ENCODE measurements at regions of chr3 and their contacts with region 1.

Region 1: GRCh38 chr3:46488735-46489361 is 8.9 kb upstream of the RTP3 start:
- DNase-seq: peak; percentile 67
- H3K4me3 ChIP-seq: no peak overlapping the region
- H3K27ac ChIP-seq: no peak overlapping the region
- H3K27me3 ChIP-seq: peaks cover 5% of the 10 kb centered on the region
- CTCF ChIP-seq: peak; percentile 100

Region 2: DNA sequence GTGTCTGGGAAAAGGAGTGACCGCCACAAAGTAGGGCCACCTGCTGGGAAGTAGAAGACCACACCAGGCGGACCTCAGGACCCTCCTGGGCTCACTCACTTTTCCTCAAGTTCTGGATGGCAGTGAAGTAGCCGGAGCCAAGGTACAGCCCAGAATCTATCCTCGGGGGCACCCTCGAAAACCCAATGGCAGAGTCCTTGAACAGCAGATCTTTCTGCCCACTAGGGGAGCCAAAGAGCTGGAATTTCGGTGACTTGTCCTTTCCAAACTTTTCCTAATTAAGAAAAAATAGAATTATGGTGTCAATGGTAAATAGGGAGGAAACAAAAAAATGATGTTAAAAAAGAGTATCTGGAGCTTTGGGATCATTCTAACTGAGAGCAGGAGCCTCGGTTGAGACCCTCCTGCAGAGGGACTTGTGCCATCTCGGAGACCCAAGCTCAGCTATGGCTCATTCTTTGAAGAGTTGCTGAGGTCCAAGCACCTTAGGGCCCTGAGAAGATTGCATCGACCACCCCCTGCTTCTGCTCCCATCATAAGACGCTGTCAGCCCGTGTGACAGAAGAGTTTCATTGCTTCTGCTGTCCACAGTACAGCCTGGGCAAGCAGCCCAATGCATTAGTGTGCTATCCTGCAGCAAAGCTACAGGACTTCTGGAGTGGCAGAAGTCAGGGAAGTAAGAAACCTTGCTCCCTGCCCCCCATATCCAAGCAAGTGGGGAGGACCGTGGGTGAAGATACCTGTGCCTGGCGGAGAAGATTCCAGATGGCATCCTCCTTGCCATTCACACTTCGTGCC is 38.9 kb before region 1 on chr3:
- CTCF ChIA-PET with region 1: interaction called, 10 read pairs
- POLR2A ChIA-PET with region 1: no interaction called
- DNase-seq: no peak
- H3K4me3 ChIP-seq: no peak overlapping the region
- H3K27ac ChIP-seq: no peak overlapping the region
- H3K27me3 ChIP-seq: peaks cover 22% of the 10 kb centered on the region
- CTCF ChIP-seq: peak; percentile 66

Region 3: DNA sequence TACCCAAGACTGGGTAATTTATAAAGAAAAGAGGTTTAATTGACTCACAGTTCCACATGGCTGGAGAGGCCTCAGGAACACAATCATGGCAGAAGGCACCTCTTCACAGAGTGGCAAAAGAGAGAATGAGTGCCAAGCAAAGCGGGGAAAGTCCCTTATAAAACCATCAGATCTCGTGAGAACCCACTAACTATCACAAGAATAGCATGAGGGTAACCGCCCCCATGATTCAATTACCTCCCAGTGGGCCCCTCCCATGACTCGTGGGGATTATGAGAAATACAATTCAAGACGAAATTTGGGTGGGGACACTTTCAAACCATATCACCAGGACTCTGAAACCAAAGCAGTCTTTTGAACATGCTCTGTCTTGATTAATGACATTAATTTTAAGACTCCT is 15.9 kb after region 1 on chr3:
- CTCF ChIA-PET with region 1: interaction called, 30 read pairs
- POLR2A ChIA-PET with region 1: interaction called, 9 read pairs
- DNase-seq: no peak
- H3K4me3 ChIP-seq: no peak overlapping the region
- H3K27ac ChIP-seq: no peak overlapping the region
- H3K27me3 ChIP-seq: no peaks in the 10 kb centered on the region
- CTCF ChIP-seq: no peak

Region 4: DNA sequence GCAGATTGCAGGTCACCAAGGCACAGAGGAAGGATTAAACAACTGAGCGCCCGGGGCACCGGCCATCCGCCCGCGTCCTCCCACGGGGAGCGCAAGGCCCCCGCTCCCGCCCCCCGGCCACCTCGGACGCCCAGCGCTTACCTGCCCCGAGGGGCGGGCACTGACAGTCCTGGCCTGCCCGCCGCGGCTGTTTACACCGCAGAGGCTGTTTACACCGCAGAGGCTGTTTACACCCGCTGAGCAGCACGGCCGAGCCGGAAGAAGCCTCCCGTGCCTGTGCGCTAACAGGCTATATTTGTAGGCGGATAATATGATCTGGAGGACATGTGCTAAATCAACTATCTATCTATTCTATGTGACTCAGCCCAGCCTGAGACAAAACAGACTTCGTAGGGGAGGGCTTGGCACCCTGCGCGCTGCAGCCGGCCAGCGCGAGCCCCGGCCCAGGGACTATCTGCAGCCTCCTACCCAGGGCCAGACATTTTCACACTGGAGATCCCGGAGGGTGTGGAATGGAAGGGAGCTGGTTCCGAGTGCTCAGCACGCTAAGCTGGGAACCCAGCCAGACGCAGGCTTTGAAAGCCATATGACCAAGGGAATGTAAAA is 77.3 kb after region 1 on chr3 and contains the start of gene LRRC2:
- CTCF ChIA-PET with region 1: interaction called, 75 read pairs
- POLR2A ChIA-PET with region 1: interaction called, 3 read pairs
- DNase-seq: peak; percentile 23
- H3K4me3 ChIP-seq: peak within 1 kb of the TSS; percentile 63
- H3K27ac ChIP-seq: no peak within 1 kb of the TSS
- H3K27me3 ChIP-seq: peaks cover 2% of the 10 kb centered on the region
- CTCF ChIP-seq: no peak
- polyA plus RNA-seq, gene LRRC2: 3.3 and 4.2 TPM in 2 replicates

Region 5: DNA sequence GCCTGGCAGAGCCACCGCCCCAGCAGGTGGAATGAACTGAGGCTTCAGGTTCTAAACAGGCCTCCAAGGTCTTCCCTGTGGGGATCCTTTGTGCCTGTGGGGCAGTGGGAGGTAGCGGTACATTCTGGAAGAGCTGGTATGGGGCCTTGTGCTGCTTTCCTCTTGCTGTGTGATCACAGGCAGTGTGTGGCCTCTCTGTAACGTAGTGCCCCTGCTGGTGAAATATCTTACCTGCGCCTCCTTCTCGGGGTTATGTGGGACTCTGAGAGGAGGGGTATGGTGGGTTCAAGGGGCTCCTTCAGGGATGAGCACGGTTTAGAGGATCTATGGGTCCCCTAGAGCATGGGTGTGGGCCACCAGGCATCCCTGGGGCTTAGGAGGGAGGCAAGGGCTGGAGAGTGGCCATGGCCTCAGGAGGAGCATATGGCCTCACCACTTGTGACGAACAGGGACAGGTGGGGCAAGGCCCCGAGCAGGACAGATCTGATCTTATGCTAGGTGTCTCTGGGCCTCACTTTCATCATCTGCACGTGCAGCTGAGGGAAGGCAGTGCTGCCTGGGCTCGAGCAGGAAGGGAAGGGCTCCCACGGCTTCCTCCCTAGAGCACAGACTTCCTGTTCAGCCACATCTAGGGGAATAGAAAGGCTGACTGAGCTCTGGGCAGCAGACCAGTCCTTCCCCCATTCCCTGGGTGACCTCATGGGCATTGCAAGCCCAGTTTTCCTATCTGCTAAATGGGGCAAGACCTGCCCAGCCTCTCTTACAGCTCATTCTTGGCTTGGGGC is 206.5 kb after region 1 on chr3:
- CTCF ChIA-PET with region 1: interaction called, 15 read pairs
- POLR2A ChIA-PET with region 1: no interaction called
- DNase-seq: no peak
- H3K4me3 ChIP-seq: no peak overlapping the region
- H3K27ac ChIP-seq: no peak overlapping the region
- H3K27me3 ChIP-seq: peaks cover 27% of the 10 kb centered on the region
- CTCF ChIP-seq: peak; percentile 34

Measured in AG04450 (cell line).